ENCODE measurements at regions of chr19 and their contacts with region 1.

Region 1: DNA sequence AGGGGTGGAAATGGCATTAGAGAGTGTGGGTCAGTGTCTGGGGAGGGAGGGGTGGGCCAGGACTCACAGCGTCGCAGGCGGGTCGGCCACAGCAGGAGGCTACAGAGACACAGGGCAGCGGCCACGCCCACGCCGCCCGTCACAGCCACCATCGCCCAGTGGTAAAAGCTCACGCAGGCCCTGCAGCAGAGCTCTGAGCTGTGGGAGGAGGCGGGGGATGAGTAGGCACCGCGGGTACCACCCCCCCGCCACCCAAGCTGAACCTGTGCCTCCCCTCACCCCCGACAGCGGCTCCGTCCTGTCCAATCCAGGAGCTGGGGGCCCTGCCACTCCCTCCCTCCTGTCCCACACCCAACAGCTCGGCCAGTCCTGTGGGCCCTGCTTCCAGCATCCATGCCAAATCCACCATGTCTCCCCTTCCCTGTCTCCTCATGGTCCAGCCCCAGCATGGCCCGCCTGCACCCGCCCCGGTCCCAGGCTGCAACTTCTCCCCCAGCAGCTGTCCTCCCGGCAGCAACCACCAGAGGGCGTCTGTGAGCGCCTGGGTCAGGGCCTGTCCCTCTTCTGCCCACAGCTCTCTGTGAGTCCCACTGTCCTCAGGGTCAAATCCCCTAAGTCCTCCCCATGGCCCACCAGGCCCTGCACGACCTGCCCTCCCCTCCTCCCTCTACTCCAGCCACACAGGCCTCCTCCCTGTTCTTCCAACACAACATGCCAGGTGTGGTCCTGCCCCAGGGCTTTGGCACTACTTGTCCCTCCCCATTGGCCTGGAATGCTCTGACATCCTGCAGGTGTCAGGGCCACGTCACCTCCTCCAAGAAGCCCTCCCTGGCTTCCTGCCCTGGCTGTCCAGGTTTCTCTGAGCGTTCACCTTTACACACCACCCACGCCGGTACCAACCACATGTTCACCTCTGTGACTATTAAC is 6.0 kb downstream of the TEKTIP1 start:
- DNase-seq: peak; percentile 68 to 73 (median 70)
- H3K4me3 ChIP-seq: no peak overlapping the region
- H3K4me3 Mint-ChIP-seq: no peak overlapping the region
- H3K27ac ChIP-seq: no peak overlapping the region
- H3K27ac Mint-ChIP-seq: peak overlapping the region; percentile 56 to 90 (median 80)
- H3K4me1 ChIP-seq: peaks cover 29 to 37% of the 10 kb centered on the region in 2 donors
- H3K4me1 Mint-ChIP-seq: peaks cover 30% of the 10 kb centered on the region
- H3K27me3 ChIP-seq: no peaks in the 10 kb centered on the region
- H3K27me3 Mint-ChIP-seq: peaks cover 0 to 1% (median 0%) of the 10 kb centered on the region in 3 donors
- CTCF ChIP-seq: peak; percentile 96

Region 2: GRCh38 chr19:3479177-3479833 is 65.7 kb before region 1 on chr19:
- intact Hi-C with region 1: no loop called
- DNase-seq: peak; percentile 54 to 65 (median 57)
- H3K4me3 ChIP-seq: peak overlapping the region in 1 of 3 experiments; percentile 56
- H3K4me3 Mint-ChIP-seq: no peak overlapping the region
- H3K27ac ChIP-seq: no peak overlapping the region
- H3K27ac Mint-ChIP-seq: peak overlapping the region in 3 of 7 donors; percentile 13 to 66 (median 31)
- H3K4me1 ChIP-seq: peaks cover 9 to 18% of the 10 kb centered on the region in 2 donors
- H3K4me1 Mint-ChIP-seq: peaks cover 15% of the 10 kb centered on the region
- H3K27me3 ChIP-seq: no peaks in the 10 kb centered on the region
- H3K27me3 Mint-ChIP-seq: peaks cover 2 to 15% (median 14%) of the 10 kb centered on the region in 3 donors
- CTCF ChIP-seq: no peak

Region 3: DNA sequence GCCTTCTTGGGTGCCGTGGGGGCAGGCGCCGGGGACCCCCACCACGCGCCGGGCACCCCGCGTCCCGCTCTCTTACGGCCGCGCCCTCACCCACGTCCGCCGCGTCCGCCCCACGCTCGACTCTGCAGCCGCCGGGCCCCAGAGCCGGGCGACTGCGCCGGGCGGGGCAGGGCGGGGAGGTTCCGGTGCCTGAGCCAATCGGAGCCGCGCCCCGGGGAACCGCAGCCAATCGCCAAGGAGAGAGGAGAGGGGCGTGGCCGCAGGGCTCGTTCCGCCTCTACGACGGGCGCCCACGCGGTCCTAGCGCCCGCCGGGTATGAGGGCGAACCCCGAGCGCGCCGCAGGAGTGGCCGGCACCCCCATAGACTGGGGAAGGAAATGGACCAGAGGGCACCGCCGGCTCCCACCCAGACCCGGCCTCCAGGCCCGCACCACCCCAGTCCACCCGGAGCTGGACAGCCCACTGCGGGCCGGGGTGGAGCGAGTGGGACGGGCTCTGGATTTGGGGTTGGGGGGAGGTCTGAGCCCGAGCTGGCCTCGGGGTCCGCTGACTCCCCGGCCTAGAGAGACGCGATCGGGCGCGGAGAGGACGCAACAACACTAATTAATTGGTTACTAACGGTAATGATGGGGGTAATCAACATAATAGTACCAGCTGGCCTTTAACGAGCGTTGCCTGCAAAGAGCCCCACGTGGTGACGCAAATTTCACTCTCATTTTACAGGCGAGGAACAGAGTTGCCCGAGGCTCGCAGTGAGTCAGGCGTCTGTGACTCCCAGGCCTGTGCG is 12.7 kb after region 1 on chr19 and contains the start of gene MFSD12:
- intact Hi-C with region 1: loop called in 1 of 2 experiments (anchors 1 kb)
- DNase-seq: peak; percentile 92 to 95 (median 92)
- H3K4me3 ChIP-seq: peak within 1 kb of the TSS; percentile 89 to 98 (median 90)
- H3K4me3 Mint-ChIP-seq: peak within 1 kb of the TSS; percentile 100
- H3K27ac ChIP-seq: peak within 1 kb of the TSS; percentile 96
- H3K27ac Mint-ChIP-seq: peak within 1 kb of the TSS; percentile 93 to 98 (median 96)
- H3K4me1 ChIP-seq: peaks cover 53 to 60% of the 10 kb centered on the region in 2 donors
- H3K4me1 Mint-ChIP-seq: peaks cover 52% of the 10 kb centered on the region
- H3K27me3 ChIP-seq: no peaks in the 10 kb centered on the region
- H3K27me3 Mint-ChIP-seq: peaks cover 0 to 4% (median 0%) of the 10 kb centered on the region in 3 donors
- CTCF ChIP-seq: no peak
- polyA plus RNA-seq, gene MFSD12: 47.9 to 150 (median 55.5) TPM

Region 4: GRCh38 chr19:3580156-3580934 is 35.3 kb after region 1 on chr19:
- intact Hi-C with region 1: loop called in 1 of 2 experiments (anchors 5 kb)
- DNase-seq: peak in 1 of 3 donors; percentile 21
- H3K4me3 ChIP-seq: no peak overlapping the region
- H3K4me3 Mint-ChIP-seq: no peak overlapping the region
- H3K27ac ChIP-seq: no peak overlapping the region
- H3K27ac Mint-ChIP-seq: peak overlapping the region in 2 of 7 donors; percentile 4 to 14
- H3K4me1 ChIP-seq: peaks cover 7 to 17% of the 10 kb centered on the region in 2 donors
- H3K4me1 Mint-ChIP-seq: peaks cover 22% of the 10 kb centered on the region
- H3K27me3 ChIP-seq: peaks cover 3 to 10% of the 10 kb centered on the region in 2 donors
- H3K27me3 Mint-ChIP-seq: peaks cover 10 to 19% (median 16%) of the 10 kb centered on the region in 3 donors
- CTCF ChIP-seq: no peak

Region 5: GRCh38 chr19:3618144-3618810 is 73.3 kb after region 1 on chr19:
- intact Hi-C with region 1: loop called in 1 of 2 experiments (anchors 5 kb)
- DNase-seq: peak; percentile 29 to 53 (median 47)
- H3K4me3 ChIP-seq: no peak overlapping the region
- H3K4me3 Mint-ChIP-seq: no peak overlapping the region
- H3K27ac ChIP-seq: no peak overlapping the region
- H3K27ac Mint-ChIP-seq: peak overlapping the region in 1 of 7 donors; percentile 60
- H3K4me1 ChIP-seq: peaks cover 0 to 5% of the 10 kb centered on the region in 2 donors
- H3K4me1 Mint-ChIP-seq: peaks cover 9% of the 10 kb centered on the region
- H3K27me3 ChIP-seq: no peaks in the 10 kb centered on the region
- H3K27me3 Mint-ChIP-seq: no peaks in the 10 kb centered on the region
- CTCF ChIP-seq: peak; percentile 93

Region 6: DNA sequence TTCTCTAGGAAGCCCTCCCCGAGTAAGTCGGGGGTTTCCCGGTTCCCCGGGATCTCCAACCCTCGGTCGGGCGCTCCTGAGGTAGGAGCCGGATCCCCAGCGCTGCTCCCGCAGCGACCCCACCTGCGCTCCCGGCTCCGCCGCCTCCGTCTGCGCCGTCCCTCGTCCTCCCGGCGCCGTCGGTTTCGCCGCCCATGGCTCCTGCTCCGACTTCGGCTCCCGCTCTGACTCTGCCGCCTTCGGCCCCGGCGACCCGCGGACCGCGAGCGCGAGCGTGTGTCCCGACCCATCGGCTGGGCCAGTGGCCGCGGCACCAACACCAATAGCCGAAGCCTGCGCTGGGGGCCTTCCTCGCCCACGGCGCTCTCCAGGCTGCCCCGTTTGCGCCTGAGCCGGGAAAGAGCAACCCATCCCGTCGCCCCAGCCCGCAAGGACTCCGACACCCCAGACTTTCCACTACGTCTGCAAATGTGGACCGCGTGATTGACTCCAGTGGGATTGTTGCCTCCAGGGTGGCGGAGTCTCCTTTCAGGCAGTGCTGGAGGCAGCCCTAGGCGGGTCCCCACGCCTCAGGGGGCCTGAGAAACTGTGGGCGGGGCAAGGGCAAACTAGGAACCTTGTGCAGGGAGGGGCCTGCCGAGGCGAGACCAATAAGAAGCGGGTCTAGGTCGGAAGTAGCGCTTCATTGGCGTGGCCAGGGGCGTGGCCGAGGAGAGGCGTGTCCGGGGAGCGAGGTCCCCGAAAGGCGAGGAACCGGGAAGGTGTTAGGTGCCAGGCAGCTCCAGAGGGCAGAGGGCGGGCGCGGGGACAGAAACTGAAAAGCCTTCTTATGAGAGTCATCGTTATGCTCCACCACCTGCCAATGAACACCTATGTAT is 81.7 kb after region 1 on chr19 and contains the start of gene CACTIN:
- intact Hi-C with region 1: loop called in 1 of 2 experiments (anchors 5 kb)
- DNase-seq: peak; percentile 98
- H3K4me3 ChIP-seq: peak within 1 kb of the TSS; percentile 64 to 98 (median 92)
- H3K4me3 Mint-ChIP-seq: peak within 1 kb of the TSS; percentile 95 to 98
- H3K27ac ChIP-seq: peak within 1 kb of the TSS; percentile 87 to 91
- H3K27ac Mint-ChIP-seq: peak within 1 kb of the TSS; percentile 96 to 99 (median 99)
- H3K4me1 ChIP-seq: peaks cover 17 to 25% of the 10 kb centered on the region in 2 donors
- H3K4me1 Mint-ChIP-seq: peaks cover 21% of the 10 kb centered on the region
- H3K27me3 ChIP-seq: no peaks in the 10 kb centered on the region
- H3K27me3 Mint-ChIP-seq: no peaks in the 10 kb centered on the region
- CTCF ChIP-seq: no peak
- polyA plus RNA-seq, gene CACTIN: 2.5 to 19.4 (median 3.0) TPM

Measured in CD14-positive monocyte (primary cell).